ENCODE measurements at regions of chr22 and their contacts with region 1.

Region 1: GRCh38 chr22:24433813-24434470 is 6.5 kb downstream of the ADORA2A start:
- DNase-seq: peak in 4 of 14 experiments; percentile 19 to 77 (median 54)
- ATAC-seq: peak; percentile 43
- H3K4me3 ChIP-seq: no peak overlapping the region
- H3K4me3 Mint-ChIP-seq: peak overlapping the region; percentile 82
- H3K27ac ChIP-seq: peak overlapping the region; percentile 66 to 98
- H3K27ac Mint-ChIP-seq: peak overlapping the region; percentile 92
- H3K4me1 ChIP-seq: peaks cover 93% of the 10 kb centered on the region
- H3K4me1 Mint-ChIP-seq: peaks cover 93% of the 10 kb centered on the region
- H3K27me3 ChIP-seq: no peaks in the 10 kb centered on the region
- H3K27me3 Mint-ChIP-seq: no peaks in the 10 kb centered on the region
- CTCF ChIP-seq: no peak

Region 2: DNA sequence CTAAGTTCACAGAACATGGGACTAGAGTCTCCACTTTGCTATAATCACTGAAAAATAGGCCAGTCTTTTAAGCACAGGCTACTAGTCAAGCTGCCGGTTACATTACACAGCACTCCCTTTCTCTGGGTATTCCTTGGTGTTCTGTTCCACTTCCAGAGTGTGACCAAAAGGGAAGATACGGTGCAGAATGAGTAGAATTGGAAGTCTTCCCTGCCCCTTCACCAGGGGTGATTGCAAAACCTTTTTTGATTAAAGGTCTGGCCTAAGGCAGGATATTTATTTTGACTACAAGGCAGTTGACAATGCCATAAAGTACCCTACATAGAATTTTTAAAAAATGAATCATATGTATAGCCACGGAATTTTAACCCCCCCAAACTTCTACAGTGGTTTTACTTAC is 66.1 kb before region 1 on chr22:
- CTCF ChIA-PET with region 1: no interaction called
- POLR2A ChIA-PET with region 1: no interaction called
- intact Hi-C with region 1: no loop called
- DNase-seq: no peak
- ATAC-seq: no peak
- H3K4me3 ChIP-seq: no peak overlapping the region
- H3K4me3 Mint-ChIP-seq: no peak overlapping the region
- H3K27ac ChIP-seq: no peak overlapping the region
- H3K27ac Mint-ChIP-seq: no peak overlapping the region
- H3K4me1 ChIP-seq: no peaks in the 10 kb centered on the region
- H3K4me1 Mint-ChIP-seq: no peaks in the 10 kb centered on the region
- H3K27me3 ChIP-seq: no peaks in the 10 kb centered on the region
- H3K27me3 Mint-ChIP-seq: no peaks in the 10 kb centered on the region
- CTCF ChIP-seq: no peak

Region 3: DNA sequence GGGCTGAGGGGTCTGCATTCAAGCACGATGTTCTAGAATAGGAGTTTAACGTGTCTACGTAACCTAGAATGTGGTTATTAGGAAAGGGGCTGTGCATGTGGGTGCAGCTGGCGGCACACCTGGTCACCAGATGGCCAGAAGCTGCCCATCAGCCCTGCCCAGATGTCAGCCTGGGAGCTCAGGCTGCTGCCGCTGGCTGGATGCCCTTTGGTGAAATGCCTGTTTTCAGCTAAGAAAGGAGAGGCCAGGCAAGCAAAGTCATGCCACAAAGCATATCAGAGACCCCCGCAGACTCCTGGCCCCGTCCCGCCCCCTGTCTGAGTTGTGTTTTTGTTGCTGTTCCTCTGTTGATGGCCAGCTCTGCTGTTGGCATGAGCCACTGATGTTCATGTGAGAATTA is 17.8 kb before region 1 on chr22:
- CTCF ChIA-PET with region 1: no interaction called
- POLR2A ChIA-PET with region 1: no interaction called
- intact Hi-C with region 1: no loop called
- DNase-seq: no peak
- ATAC-seq: no peak
- H3K4me3 ChIP-seq: no peak overlapping the region
- H3K4me3 Mint-ChIP-seq: no peak overlapping the region
- H3K27ac ChIP-seq: no peak overlapping the region
- H3K27ac Mint-ChIP-seq: no peak overlapping the region
- H3K4me1 ChIP-seq: peaks cover under 1% of the 10 kb centered on the region
- H3K4me1 Mint-ChIP-seq: peaks cover under 1% of the 10 kb centered on the region
- H3K27me3 ChIP-seq: no peaks in the 10 kb centered on the region
- H3K27me3 Mint-ChIP-seq: no peaks in the 10 kb centered on the region
- CTCF ChIP-seq: no peak

Region 4: DNA sequence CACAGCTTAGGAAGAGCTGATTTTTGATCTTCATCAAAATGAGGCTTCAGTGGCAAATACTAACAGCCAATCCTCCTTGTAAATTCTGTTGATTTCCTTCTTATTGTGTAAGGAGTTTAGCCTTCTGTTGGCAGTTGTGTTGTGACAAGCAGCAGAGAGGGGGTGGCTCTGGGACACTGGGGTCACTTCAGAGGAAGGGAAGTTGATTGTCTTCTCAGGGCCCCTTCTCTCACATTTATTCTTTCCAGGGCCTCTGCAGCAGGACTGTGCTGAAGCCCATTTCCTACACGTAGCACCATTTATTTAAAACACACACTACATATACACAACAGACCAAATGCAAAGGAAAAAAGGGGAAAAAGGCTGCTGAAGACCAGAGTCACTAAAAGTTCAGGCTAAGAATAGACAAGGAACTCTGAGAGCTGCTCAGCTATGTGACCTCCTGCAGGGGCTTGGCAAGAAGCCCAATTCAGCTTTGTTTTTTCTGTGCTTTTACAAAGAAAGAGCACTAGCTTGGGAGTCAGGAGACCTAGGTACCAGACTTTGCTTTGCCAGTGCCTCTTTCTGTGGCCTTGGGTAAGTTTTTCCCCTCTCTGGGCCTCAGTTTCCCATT is 32.9 kb after region 1 on chr22:
- CTCF ChIA-PET with region 1: no interaction called
- POLR2A ChIA-PET with region 1: no interaction called
- intact Hi-C with region 1: loop called in 1 of 2 experiments (anchors 5 kb)
- DNase-seq: no peak
- ATAC-seq: no peak
- H3K4me3 ChIP-seq: no peak overlapping the region
- H3K4me3 Mint-ChIP-seq: no peak overlapping the region
- H3K27ac ChIP-seq: no peak overlapping the region
- H3K27ac Mint-ChIP-seq: no peak overlapping the region
- H3K4me1 ChIP-seq: no peaks in the 10 kb centered on the region
- H3K4me1 Mint-ChIP-seq: no peaks in the 10 kb centered on the region
- H3K27me3 ChIP-seq: no peaks in the 10 kb centered on the region
- H3K27me3 Mint-ChIP-seq: no peaks in the 10 kb centered on the region
- CTCF ChIP-seq: no peak

Region 5: GRCh38 chr22:24503137-24503842 is 69.3 kb after region 1 on chr22:
- CTCF ChIA-PET with region 1: interaction called, 3 read pairs
- POLR2A ChIA-PET with region 1: interaction called, 4 read pairs
- intact Hi-C with region 1: loop called in 1 of 2 experiments (anchors 2 kb)
- DNase-seq: peak; percentile 31 to 83 (median 52)
- ATAC-seq: peak; percentile 65
- H3K4me3 ChIP-seq: no peak overlapping the region
- H3K4me3 Mint-ChIP-seq: no peak overlapping the region
- H3K27ac ChIP-seq: no peak overlapping the region
- H3K27ac Mint-ChIP-seq: no peak overlapping the region
- H3K4me1 ChIP-seq: peaks cover 4% of the 10 kb centered on the region
- H3K4me1 Mint-ChIP-seq: peaks cover 7% of the 10 kb centered on the region
- H3K27me3 ChIP-seq: no peaks in the 10 kb centered on the region
- H3K27me3 Mint-ChIP-seq: no peaks in the 10 kb centered on the region
- CTCF ChIP-seq: peak; percentile 67

Measured in CD4-positive, alpha-beta T cell (primary cell).